Mammary epithelial cell (primary cell): ENCODE measurements at regions of chr3 and their contacts with region 1.

Region 1: GRCh38 chr3:185983495-185984141 is 45.8 kb upstream of the TRA2B start:
- DNase-seq: peak; percentile 61
- H3K4me3 ChIP-seq: no peak overlapping the region
- H3K27ac ChIP-seq: no peak overlapping the region
- H3K4me1 ChIP-seq: no peaks in the 10 kb centered on the region
- H3K27me3 ChIP-seq: no peaks in the 10 kb centered on the region
- CTCF ChIP-seq: peak; percentile 90 to 95

Region 2: DNA sequence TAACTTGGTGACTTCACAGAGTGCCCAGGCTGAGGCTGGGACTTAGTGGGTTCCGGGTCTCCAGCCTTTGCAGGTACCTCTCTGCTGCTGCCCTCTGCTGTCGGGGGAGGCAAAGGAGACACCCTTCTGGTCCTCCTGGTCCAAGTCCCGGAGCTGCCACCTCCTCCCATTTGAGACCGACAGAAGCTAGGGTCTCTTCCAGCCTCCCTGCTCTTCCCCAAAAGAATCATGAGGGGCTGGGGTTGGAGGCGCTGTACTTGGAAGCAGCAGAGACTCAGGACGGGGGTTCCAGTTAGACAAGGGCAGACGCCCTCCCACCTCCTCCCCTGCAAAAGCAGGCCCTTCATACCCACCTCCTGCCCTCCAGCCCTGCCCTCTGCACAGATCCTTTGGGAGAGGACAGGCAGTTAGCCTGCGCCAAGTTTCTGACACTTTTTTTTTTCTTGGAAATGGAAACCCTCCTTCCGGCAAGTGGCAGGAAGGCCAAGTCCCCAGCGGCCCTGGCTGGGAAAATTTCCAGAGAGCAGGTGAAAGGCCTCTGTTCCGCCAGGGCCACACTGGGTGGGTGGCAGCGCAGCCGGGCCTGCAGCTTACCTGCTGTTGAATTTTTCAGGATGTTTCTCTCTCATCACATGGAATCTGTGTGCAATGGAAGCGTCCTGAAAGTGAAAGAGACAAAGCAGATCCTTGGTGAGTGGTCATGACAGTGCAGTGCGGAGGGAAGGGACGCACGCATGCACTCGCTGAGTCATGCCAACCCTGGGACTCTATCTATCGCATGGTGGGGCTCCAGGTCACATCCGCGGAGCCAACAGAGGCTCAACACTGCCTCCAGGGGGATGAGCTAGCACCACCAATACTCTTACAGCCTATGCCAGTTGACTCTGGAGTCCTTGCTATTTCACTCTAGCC is 258.5 kb after region 1 on chr3:
- CTCF ChIA-PET with region 1: interaction called, 10 read pairs
- dilution Hi-C with region 1: no loop called
- in situ Hi-C with region 1: loop called in 1 of 2 experiments (anchors 5 kb)
- intact Hi-C with region 1: loop called (anchors 1 kb)
- DNase-seq: peak; percentile 83
- H3K4me3 ChIP-seq: peak overlapping the region; percentile 14 to 35 (median 28)
- H3K27ac ChIP-seq: peak overlapping the region; percentile 5
- H3K4me1 ChIP-seq: peaks cover 8% of the 10 kb centered on the region
- H3K27me3 ChIP-seq: no peaks in the 10 kb centered on the region
- CTCF ChIP-seq: peak; percentile 56 to 75

Region 3: DNA sequence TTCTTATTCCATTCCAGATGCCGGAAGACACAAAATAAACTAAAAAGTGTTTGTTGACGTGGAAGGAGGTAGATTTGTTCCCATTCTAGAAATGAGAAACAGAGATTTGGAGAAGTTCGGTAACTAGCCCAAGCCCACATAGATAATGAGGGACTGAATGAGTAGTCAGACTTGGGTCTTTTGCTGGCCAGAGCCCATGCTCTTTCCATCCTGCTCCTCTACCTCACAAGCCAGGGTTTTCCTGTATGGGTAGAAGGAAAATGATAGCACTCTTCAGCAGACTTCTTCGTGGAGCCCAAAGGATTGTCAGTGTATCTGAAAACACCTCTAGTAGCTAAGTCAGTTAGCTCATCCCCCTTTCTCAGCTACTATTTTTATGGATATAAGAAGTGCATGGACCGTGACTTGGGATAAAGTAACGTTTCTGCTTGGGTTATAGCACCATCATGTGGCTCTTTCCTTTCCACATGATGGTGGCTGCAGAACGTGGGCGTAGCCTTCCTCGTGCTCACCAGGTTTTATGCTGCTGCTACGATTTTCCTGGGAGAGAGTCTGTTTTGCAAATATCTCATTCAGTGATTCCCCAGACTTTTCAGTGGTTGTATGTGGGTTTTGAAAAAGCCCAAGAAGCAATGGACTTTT is 293.8 kb after region 1 on chr3:
- CTCF ChIA-PET with region 1: no interaction called
- dilution Hi-C with region 1: loop called (anchors 25 kb)
- in situ Hi-C with region 1: loop called in 1 of 2 experiments (anchors 10 kb)
- intact Hi-C with region 1: loop called (anchors 1 kb)
- DNase-seq: peak; percentile 48
- H3K4me3 ChIP-seq: no peak overlapping the region
- H3K27ac ChIP-seq: no peak overlapping the region
- H3K4me1 ChIP-seq: no peaks in the 10 kb centered on the region
- H3K27me3 ChIP-seq: no peaks in the 10 kb centered on the region
- CTCF ChIP-seq: peak; percentile 54 to 67

Region 4: DNA sequence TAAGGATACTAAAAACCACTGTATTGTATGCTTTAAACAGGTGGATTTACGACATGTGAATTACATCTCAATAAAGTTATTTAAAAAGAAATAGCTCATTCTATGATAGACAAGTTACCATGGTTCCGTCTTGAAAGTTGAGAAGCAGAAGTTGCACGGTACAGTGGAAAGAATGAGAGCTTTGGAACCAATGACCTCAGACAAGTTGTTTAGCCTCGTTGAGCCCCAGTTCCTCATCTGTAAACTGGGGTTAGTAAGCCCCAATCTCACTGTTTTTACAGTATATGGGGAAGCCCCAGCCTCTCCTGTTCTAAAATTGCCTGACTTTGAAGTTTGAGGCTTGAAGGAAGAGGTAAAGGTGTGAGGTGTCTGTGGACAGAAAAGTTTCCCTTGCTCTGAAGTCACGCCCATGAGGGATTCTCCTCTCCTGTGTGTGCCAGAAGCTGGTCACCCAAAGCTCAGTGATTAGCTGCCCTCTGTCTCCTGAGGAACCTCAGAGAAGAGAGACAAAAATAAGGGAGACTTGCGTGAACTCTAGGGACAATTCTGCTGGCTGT is 550.6 kb after region 1 on chr3:
- CTCF ChIA-PET with region 1: no interaction called
- dilution Hi-C with region 1: no loop called
- in situ Hi-C with region 1: loop called in 1 of 2 experiments (anchors 10 kb)
- intact Hi-C with region 1: no loop called
- DNase-seq: no peak
- H3K4me3 ChIP-seq: no peak overlapping the region
- H3K27ac ChIP-seq: no peak overlapping the region
- H3K4me1 ChIP-seq: no peaks in the 10 kb centered on the region
- H3K27me3 ChIP-seq: no peaks in the 10 kb centered on the region
- CTCF ChIP-seq: no peak

Region 5: DNA sequence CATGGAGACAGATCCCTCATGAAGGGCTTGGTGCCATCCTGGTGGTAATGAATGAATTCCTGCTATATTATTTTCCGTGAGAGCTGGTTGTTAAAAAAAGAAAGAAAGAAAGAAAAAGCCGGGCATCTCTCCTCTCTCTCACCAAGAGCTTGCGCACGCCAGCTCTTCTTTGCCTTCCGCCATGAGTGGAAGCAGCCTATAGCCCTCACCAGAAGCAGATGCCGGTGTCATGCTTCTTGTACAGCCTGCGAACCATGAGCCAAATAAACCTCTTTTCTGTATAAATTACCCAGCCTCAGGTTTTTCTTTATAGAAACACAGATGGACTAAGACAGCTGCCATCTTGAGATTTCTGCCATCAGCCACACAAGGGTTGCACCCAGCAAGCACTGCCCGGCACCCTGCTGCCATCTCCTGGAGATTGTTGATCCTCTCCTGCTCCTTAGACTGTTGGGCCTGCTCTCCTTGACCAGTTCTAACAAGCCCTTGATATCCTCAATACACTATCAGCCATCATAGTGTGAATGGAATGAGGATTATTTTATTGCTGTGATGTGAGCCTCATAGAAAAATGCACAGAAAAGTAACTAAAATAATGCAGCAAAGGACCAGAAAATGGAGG is 625.7 kb after region 1 on chr3:
- CTCF ChIA-PET with region 1: interaction called, 3 read pairs
- dilution Hi-C with region 1: no loop called
- in situ Hi-C with region 1: no loop called
- intact Hi-C with region 1: loop called (anchors 1 kb)
- DNase-seq: peak; percentile 72
- H3K4me3 ChIP-seq: no peak overlapping the region
- H3K27ac ChIP-seq: no peak overlapping the region
- H3K4me1 ChIP-seq: peaks cover 9% of the 10 kb centered on the region
- H3K27me3 ChIP-seq: no peaks in the 10 kb centered on the region
- CTCF ChIP-seq: peak; percentile 68 to 84

Region 6: GRCh38 chr3:186821429-186822367 is 838.1 kb after region 1 on chr3:
- CTCF ChIA-PET with region 1: no interaction called
- dilution Hi-C with region 1: loop called (anchors 25 kb)
- in situ Hi-C with region 1: loop called in 1 of 2 experiments (anchors 25 kb)
- intact Hi-C with region 1: loop called (anchors 5 kb)
- DNase-seq: peak; percentile 24
- H3K4me3 ChIP-seq: no peak overlapping the region
- H3K27ac ChIP-seq: no peak overlapping the region
- H3K4me1 ChIP-seq: peaks cover 7% of the 10 kb centered on the region
- H3K27me3 ChIP-seq: no peaks in the 10 kb centered on the region
- CTCF ChIP-seq: peak; percentile 39 to 70